ENCODE measurements at regions of chr1 and their contacts with region 1.

Region 1: DNA sequence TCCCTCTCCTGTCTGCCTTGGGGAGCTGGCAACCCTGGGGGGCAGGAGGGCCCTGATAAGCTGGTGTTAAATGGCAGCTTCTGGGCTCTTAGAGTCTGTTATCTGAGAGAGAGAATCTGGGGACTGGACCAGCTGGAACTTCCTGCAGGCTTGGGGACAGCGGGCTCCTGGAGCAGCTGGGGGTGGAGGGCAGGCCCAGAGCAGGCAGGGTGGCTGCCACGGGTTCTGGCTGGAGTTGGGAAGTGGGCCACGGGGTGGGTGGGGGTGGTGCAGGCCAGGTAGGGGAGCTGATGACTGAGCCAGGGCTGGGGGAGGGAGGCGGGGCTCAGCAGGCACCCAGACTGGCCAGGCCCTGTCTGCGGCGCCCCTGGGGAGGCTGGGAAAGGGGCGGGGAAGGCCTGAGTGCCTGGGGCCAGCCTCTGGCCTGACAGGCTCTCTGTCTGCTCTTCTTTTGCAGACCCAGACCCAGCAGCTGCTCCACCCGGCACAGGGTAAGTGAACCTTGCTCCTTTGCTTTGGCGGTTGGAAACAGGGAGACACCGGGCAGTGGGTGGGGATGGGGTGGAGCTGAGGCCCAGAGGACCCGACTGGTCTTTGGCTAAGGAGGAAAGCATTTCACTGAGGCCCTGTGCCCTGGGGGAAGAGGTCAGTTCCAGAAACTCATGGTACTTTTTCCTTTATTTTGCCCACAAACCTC is 48.6 kb downstream of the ARHGEF10L start:
- DNase-seq: peak; percentile 62 to 80
- H3K4me3 ChIP-seq: no peak overlapping the region
- H3K27ac ChIP-seq: peak overlapping the region; percentile 66
- H3K4me1 ChIP-seq: peaks cover 18% of the 10 kb centered on the region; the same call in 1 of the 2 replicates
- H3K27me3 ChIP-seq: no peaks in the 10 kb centered on the region
- CTCF ChIP-seq: no peak

Region 2: DNA sequence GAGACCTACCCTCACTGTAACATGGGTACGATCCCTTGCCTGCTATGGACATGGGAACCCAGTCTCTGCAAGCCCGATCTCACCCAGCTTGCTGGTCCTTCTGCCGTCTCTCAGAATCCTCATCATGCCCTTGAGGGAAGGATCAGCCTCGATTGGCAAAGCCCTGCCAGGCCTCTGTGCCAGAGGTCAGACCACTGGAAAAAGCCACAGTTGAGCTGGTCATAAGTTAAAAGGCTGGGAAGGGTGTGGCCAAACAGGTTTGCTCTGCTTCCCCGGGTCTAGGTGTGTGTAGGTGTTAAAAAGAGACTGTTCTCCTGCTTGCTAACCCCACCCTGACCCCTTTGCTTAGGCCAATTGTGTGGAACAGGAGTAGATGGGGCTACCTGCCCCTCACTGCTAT is 358.8 kb before region 1 on chr1:
- CTCF ChIA-PET with region 1: interaction called, 11 read pairs
- POLR2A ChIA-PET with region 1: no interaction called
- intact Hi-C with region 1: no loop called
- DNase-seq: peak; percentile 75 to 87
- H3K4me3 ChIP-seq: no peak overlapping the region; the same call in 1 of the 2 replicates
- H3K27ac ChIP-seq: peak overlapping the region; percentile 100
- H3K4me1 ChIP-seq: peaks cover 89% of the 10 kb centered on the region
- H3K27me3 ChIP-seq: no peaks in the 10 kb centered on the region
- CTCF ChIP-seq: no peak

Region 3: GRCh38 chr1:17502326-17502778 is 85.8 kb before region 1 on chr1:
- CTCF ChIA-PET with region 1: interaction called, 3 read pairs
- POLR2A ChIA-PET with region 1: no interaction called
- intact Hi-C with region 1: loop called (anchors 5 kb)
- DNase-seq: peak; percentile 54 to 79
- H3K4me3 ChIP-seq: no peak overlapping the region
- H3K27ac ChIP-seq: no peak overlapping the region
- H3K4me1 ChIP-seq: 0 out of 2 replicates have a peak, but pooled peaks cover 7% of the 10 kb centered on the region
- H3K27me3 ChIP-seq: no peaks in the 10 kb centered on the region
- CTCF ChIP-seq: peak; percentile 81

Region 4: GRCh38 chr1:17531682-17532487 is 56.3 kb before region 1 on chr1:
- CTCF ChIA-PET with region 1: interaction called, 18 read pairs
- POLR2A ChIA-PET with region 1: no interaction called
- intact Hi-C with region 1: loop called (anchors 10 kb)
- DNase-seq: no peak
- H3K4me3 ChIP-seq: no peak overlapping the region
- H3K27ac ChIP-seq: no peak overlapping the region
- H3K4me1 ChIP-seq: peaks cover 9% of the 10 kb centered on the region
- H3K27me3 ChIP-seq: no peaks in the 10 kb centered on the region
- CTCF ChIP-seq: no peak

Region 5: GRCh38 chr1:17551755-17552234 is 36.3 kb before region 1 on chr1:
- CTCF ChIA-PET with region 1: no interaction called
- POLR2A ChIA-PET with region 1: interaction called, 7 read pairs
- intact Hi-C with region 1: loop called (anchors 5 kb)
- DNase-seq: peak in 1 of 2 experiments; percentile 63
- H3K4me3 ChIP-seq: no peak overlapping the region; the same call in 1 of the 2 replicates
- H3K27ac ChIP-seq: peak overlapping the region; percentile 95
- H3K4me1 ChIP-seq: peaks cover 56% of the 10 kb centered on the region
- H3K27me3 ChIP-seq: no peaks in the 10 kb centered on the region
- CTCF ChIP-seq: no peak

Region 6: GRCh38 chr1:17569200-17570161 is 18.7 kb before region 1 on chr1:
- CTCF ChIA-PET with region 1: no interaction called
- POLR2A ChIA-PET with region 1: no interaction called
- intact Hi-C with region 1: loop called (anchors 1 kb)
- DNase-seq: peak; percentile 82 to 91
- H3K4me3 ChIP-seq: peak overlapping the region; percentile 43; the same call in 1 of the 2 replicates
- H3K27ac ChIP-seq: peak overlapping the region; percentile 99
- H3K4me1 ChIP-seq: peaks cover 24% of the 10 kb centered on the region
- H3K27me3 ChIP-seq: no peaks in the 10 kb centered on the region
- CTCF ChIP-seq: no peak

Region 7: DNA sequence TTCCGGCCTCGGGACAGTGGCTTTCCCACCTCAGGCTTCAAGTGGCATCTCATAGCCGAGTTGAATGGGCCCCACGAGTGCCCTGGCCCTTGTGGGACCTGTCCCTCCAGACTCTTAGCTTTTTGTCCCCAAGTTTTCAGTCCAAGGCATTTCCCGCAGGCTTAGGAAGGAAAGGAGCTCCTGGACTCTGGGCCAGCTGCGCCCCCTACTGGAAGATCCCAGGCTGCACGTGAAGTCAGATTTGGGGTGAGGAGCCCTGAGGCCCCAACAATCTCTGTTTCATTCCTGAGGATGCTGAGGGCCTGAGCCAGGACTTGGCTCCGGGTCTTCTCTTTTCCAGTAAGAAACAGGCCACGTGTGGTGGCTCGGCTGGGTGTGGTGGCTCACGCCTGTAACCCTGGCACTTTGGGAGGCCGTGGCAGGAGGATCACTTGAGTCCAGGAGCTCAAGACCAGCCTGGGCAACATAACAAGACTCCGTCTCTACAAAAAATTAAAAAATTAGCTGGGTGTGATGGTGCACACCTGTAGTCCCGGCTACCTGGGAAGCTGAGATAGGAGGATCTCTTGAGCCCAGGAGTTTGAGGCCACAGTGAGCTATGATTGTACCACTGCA is 18.8 kb after region 1 on chr1:
- CTCF ChIA-PET with region 1: no interaction called
- POLR2A ChIA-PET with region 1: no interaction called
- intact Hi-C with region 1: no loop called
- DNase-seq: peak in 1 of 2 experiments; percentile 71
- H3K4me3 ChIP-seq: no peak overlapping the region
- H3K27ac ChIP-seq: no peak overlapping the region
- H3K4me1 ChIP-seq: no peaks in the 10 kb centered on the region
- H3K27me3 ChIP-seq: no peaks in the 10 kb centered on the region
- CTCF ChIP-seq: peak; percentile 85

Region 8: DNA sequence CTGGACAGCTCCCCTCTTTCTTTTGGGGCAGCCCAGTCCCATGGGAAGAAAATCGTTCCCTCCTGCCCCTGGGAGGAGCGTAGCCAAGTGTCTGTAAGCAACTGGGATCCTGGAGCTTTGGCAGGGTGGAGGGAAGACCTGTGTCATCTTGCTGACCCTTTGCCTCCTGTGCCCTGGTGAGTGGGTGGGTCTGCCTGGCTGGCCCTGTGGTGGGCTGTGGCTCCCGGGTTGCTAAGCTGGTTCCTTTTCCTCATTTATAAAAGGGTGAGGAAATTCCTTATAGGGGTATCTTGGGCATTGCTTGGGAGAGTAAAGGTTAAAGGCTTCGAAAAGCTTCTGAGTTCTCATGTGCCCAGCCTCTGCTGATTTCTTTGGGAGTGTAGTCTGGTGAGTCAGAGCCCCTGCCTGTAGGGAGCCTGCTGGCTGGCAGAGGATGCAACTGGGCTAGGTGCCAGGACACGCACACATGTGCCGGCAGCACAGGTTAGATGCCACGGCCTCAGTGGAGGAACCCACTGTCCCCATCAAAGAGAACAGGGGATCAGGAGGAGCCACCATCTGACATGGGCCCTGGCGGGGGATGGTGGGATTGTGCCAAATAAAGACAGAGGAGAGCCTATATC is 36.6 kb after region 1 on chr1:
- CTCF ChIA-PET with region 1: no interaction called
- POLR2A ChIA-PET with region 1: no interaction called
- intact Hi-C with region 1: no loop called
- DNase-seq: peak; percentile 42 to 78
- H3K4me3 ChIP-seq: no peak overlapping the region
- H3K27ac ChIP-seq: peak overlapping the region; percentile 71
- H3K4me1 ChIP-seq: peaks cover 19% of the 10 kb centered on the region
- H3K27me3 ChIP-seq: no peaks in the 10 kb centered on the region
- CTCF ChIP-seq: no peak

Measured in PC-9 (cell line).